GM18951 (cell line): ENCODE measurements at regions of chr10 and their contacts with region 1.

Region 1: DNA sequence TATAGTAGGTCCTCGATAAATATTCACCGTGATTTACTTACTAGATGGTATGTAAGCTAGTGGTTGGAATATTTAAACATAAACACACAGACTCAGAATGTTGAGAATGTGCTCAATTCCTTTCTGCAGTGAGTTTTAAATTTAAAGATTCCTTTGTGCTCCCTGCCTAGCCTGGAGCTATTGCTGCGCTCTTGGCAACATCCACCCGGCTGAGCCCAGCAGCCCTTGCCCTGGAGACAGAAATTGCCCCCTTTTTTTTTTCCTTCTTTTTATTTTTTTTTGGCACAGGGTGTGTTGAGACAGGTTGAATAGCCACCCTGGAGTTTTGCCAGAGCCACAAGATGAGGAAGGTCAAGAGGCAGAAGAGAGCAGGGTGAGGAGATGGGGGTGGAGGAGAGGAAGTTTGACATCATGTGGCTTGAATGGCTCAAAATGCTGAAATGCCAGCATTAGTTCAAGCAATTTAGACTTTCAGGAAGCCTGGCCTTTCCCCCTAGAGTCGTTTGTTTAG is 180.8 kb downstream of the PRKCQ start:
- POLR2A ChIP-seq: no peak

Region 2: GRCh38 chr10:6108603-6109443 is 290.5 kb before region 1 on chr10:
- in situ Hi-C with region 1: loop called (anchors 5 kb)
- POLR2A ChIP-seq: no peak

Region 3: GRCh38 chr10:6269953-6270867 is 129.1 kb before region 1 on chr10:
- in situ Hi-C with region 1: no loop called
- POLR2A ChIP-seq: no peak

Region 4: DNA sequence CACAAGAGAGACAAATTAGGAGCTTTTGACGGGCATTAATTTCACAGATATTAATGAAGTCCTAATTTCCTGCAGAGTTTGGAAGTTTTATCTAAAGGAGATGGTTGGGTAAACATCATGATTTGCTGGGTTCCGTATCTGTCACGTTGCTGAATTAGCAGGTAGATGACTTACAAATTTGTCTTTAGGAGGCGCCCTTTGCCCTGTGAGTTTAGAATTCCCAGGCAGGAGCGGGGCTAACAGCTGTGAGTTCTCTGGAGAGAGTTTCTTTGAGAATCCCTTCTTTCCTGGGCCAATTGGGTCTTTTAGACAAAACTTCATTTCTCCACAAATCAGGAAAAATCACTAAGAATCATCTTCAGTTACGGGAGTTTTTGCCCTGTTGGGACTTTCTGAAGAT is 117.0 kb after region 1 on chr10:
- in situ Hi-C with region 1: no loop called
- POLR2A ChIP-seq: no peak